HepG2 (cell line): ENCODE measurements at regions of chr13 and their contacts with region 1.

Region 1: GRCh38 chr13:81171065-81171647 is 830.2 kb upstream of the SPRY2 start:
- DNase-seq: peak; percentile 5
- ATAC-seq: peak; percentile 39; the same call in 2 of the 3 replicates
- H3K4me3 ChIP-seq: no peak overlapping the region
- H3K27ac ChIP-seq: no peak overlapping the region
- H3K4me1 ChIP-seq: no peaks in the 10 kb centered on the region
- H3K27me3 ChIP-seq: no peaks in the 10 kb centered on the region
- CTCF ChIP-seq: peak; percentile 47
- EP300 ChIP-seq: no peak
- POLR2A ChIP-seq: no peak
- RAD21 ChIP-seq: no peak

Region 2: DNA sequence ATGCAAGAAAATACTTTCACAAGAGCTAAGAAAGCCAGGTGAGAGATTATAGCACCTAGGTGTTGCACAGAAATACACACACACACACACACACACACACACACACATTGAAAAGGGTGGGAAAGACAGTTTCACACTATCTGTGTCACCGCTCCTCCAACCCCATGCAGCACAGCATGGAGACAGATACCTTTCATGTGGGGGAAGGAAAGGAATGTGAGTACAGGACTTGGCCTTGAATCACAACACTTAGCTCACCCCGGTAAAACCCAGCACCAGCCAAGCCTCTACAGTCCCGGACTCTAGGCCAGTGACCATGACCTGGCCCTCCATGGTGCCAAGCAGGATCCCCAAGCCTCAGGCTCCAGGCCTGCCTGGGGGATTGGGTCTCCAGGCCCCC is 368.2 kb before region 1 on chr13:
- CTCF ChIA-PET with region 1: no interaction called
- POLR2A ChIA-PET with region 1: no interaction called
- in situ Hi-C with region 1: no loop called
- intact Hi-C with region 1: no loop called
- DNase-seq: no peak
- ATAC-seq: no peak
- H3K4me3 ChIP-seq: no peak overlapping the region
- H3K27ac ChIP-seq: no peak overlapping the region
- H3K4me1 ChIP-seq: no peaks in the 10 kb centered on the region
- H3K27me3 ChIP-seq: no peaks in the 10 kb centered on the region
- CTCF ChIP-seq: no peak
- EP300 ChIP-seq: no peak
- POLR2A ChIP-seq: no peak
- RAD21 ChIP-seq: no peak

Region 3: DNA sequence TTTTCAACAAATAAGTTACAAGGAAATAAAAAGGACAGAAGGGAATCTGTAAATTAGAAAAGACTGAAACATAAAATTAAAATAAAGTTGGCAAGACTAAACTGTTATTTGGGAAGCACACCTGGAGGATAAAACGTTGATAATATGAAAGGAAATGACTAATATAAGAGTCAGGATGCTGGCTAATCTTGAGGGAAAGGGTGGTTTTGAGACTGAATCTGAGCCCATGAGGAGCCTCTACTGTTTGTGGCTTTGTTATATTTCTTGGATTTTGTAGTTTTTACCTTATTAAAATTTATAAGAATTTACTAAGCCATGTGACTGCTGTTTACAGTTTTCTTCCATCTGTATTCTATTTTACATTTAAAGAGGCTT is 112.3 kb before region 1 on chr13:
- CTCF ChIA-PET with region 1: no interaction called
- POLR2A ChIA-PET with region 1: no interaction called
- in situ Hi-C with region 1: no loop called
- intact Hi-C with region 1: loop called (anchors 10 kb)
- DNase-seq: no peak
- ATAC-seq: no peak
- H3K4me3 ChIP-seq: no peak overlapping the region
- H3K27ac ChIP-seq: no peak overlapping the region
- H3K4me1 ChIP-seq: no peaks in the 10 kb centered on the region
- H3K27me3 ChIP-seq: no peaks in the 10 kb centered on the region
- CTCF ChIP-seq: no peak
- EP300 ChIP-seq: no peak
- POLR2A ChIP-seq: no peak
- RAD21 ChIP-seq: no peak

Region 4: DNA sequence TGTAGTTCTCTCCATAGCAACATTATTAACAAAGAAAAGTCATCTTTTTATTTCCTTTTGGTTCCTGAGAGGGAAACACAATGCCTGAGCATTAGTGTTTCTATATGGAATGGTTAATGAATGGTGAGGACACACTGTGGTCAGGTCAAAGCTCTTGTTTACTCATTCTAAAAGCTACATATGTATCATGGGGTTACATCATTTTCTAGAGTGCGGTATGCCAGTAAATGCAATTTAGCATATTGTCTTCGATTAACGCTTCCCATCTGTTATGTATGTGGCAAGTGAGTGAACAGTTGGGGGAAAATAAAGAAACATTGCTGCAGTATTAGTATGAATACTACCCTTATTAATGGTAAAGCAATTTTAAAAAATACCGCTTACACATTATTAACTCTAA is 322.0 kb after region 1 on chr13:
- CTCF ChIA-PET with region 1: no interaction called
- POLR2A ChIA-PET with region 1: no interaction called
- in situ Hi-C with region 1: no loop called
- intact Hi-C with region 1: loop called (anchors 10 kb)
- DNase-seq: peak; percentile 29
- ATAC-seq: peak; percentile 99
- H3K4me3 ChIP-seq: no peak overlapping the region
- H3K27ac ChIP-seq: no peak overlapping the region
- H3K4me1 ChIP-seq: peaks cover 7% of the 10 kb centered on the region
- H3K27me3 ChIP-seq: no peaks in the 10 kb centered on the region
- CTCF ChIP-seq: no peak
- EP300 ChIP-seq: 0 out of 4 replicates have a peak, but pooled peaks of 1 of the 2 experiments have one; percentile 7
- POLR2A ChIP-seq: no peak
- RAD21 ChIP-seq: no peak